ENCODE measurements at regions of chr9 and their contacts with region 1.

Region 1: DNA sequence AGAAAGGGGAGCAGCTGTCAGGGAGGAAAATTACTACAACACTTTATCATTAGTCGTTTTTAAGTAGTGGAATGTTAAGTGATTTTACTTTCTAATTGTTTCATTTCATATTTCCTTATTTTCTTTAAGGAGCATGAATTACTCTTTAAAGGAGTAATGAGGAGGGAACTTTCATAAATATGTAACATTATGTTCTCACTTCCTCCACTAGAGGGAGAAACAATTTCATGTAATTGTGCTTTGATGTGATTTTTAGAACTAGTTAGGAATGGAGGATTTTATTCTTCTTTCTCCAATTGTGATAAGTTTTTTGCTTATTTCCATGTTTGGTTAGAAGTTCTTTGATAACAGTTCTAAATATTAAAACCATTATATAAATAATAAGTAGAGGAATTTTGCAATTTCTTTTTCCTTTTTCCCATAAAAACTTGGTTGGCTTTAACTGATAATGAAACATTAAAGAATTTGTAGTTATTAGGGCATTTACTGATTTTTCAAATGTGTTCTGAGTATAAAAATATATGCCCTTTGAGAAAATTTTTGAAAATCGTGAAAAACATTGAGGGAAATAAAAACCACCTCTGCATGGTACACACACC is 25.6 kb downstream of the CEP78 start:
- DNase-seq: peak; percentile 23
- ATAC-seq: no peak
- H3K4me3 ChIP-seq: no peak overlapping the region
- H3K27ac ChIP-seq: no peak overlapping the region
- H3K4me1 ChIP-seq: no peaks in the 10 kb centered on the region
- H3K27me3 ChIP-seq: no peaks in the 10 kb centered on the region
- CTCF ChIP-seq: peak; percentile 66
- EP300 ChIP-seq: no peak
- POLR2A ChIP-seq: no peak
- RAD21 ChIP-seq: peak; percentile 20; the same call in 1 of the 2 replicates

Region 2: DNA sequence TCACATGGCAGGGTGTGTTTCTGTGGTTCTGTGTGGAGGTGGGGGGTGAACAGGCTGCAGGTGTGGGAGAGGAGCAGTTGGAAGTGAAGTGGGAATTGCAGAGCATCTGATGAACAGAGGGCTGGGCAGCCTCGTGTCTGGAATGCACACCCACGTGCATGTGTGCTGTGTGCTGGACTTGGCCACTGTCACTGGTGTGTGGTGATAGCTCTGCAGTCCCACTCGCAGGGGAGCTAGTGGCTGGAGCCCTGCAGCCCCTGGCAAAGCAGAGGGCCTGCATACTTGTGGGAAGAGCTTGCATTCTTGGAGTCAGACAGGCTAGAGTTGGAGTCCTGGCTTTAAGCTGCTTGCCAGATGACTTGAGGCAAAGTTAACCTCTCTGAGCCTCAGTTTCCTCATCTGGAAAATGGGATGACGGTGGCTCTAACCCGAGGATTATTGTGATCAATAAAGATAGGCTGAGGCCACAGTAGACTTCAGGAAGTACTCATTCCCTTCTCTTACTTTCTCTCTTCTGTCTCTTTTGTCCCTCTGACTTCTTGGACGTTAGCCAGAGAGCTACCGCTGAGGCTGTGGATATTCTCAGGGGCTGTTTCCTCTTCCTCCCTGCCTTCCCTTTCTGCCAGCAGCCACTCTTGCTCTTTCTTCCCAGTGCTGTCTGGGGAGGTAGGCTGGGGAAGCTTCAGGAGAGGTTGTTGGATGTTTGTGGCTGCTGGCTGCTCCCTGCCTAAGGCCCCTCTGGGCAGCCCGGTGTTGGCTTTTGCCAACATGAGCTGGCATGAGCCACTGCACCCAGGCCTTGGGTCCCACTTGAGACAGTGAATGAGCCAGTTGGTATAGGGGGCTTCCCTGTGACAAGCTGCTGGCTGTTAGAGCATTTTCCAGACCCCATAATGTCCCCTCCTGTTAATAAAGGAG is 53.7 kb after region 1 on chr9:
- CTCF ChIA-PET with region 1: no interaction called
- POLR2A ChIA-PET with region 1: no interaction called
- in situ Hi-C with region 1: loop called (anchors 10 kb)
- intact Hi-C with region 1: loop called (anchors 5 kb)
- DNase-seq: no peak
- ATAC-seq: peak; percentile 13
- H3K4me3 ChIP-seq: no peak overlapping the region
- H3K27ac ChIP-seq: no peak overlapping the region
- H3K4me1 ChIP-seq: no peaks in the 10 kb centered on the region; the same call in 1 of the 2 replicates
- H3K27me3 ChIP-seq: no peaks in the 10 kb centered on the region
- CTCF ChIP-seq: no peak
- EP300 ChIP-seq: no peak
- POLR2A ChIP-seq: no peak; a peak in 1 of 4 replicates
- RAD21 ChIP-seq: no peak

Region 3: GRCh38 chr9:78578072-78578471 is 316.6 kb after region 1 on chr9:
- CTCF ChIA-PET with region 1: no interaction called
- POLR2A ChIA-PET with region 1: no interaction called
- in situ Hi-C with region 1: no loop called
- intact Hi-C with region 1: no loop called
- DNase-seq: no peak
- ATAC-seq: no peak
- H3K4me3 ChIP-seq: no peak overlapping the region
- H3K27ac ChIP-seq: no peak overlapping the region
- H3K4me1 ChIP-seq: no peaks in the 10 kb centered on the region
- H3K27me3 ChIP-seq: no peaks in the 10 kb centered on the region
- CTCF ChIP-seq: no peak
- EP300 ChIP-seq: no peak
- POLR2A ChIP-seq: no peak
- RAD21 ChIP-seq: no peak

Region 4: DNA sequence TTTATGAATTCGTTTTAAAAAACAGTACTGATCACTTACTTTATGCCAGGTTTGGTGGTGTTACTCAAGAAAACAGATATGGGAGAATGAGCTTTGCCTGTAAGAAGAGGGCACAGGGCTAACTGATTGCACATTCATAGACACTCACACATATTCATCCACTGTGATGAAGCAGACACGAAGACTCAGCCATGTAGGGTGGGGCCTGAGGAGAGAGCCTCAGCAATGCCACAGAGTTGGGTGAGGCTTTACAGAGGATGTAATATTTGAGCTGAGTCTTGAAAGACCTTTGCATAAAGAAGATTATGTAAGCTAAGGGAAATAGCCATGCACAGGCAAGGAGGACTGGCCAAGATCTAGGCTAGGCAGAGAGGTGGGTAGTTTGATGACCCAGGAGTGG is 508.2 kb after region 1 on chr9:
- CTCF ChIA-PET with region 1: no interaction called
- POLR2A ChIA-PET with region 1: no interaction called
- in situ Hi-C with region 1: no loop called
- intact Hi-C with region 1: no loop called
- DNase-seq: no peak
- ATAC-seq: no peak
- H3K4me3 ChIP-seq: no peak overlapping the region
- H3K27ac ChIP-seq: no peak overlapping the region
- H3K4me1 ChIP-seq: no peaks in the 10 kb centered on the region
- H3K27me3 ChIP-seq: no peaks in the 10 kb centered on the region
- CTCF ChIP-seq: no peak
- EP300 ChIP-seq: no peak
- POLR2A ChIP-seq: no peak
- RAD21 ChIP-seq: no peak